H1 (cell line): ENCODE measurements at regions of chr18 and their contacts with region 1.

Region 1: GRCh38 chr18:48951448-48952286 is 902 bp upstream of the SMAD7 start:
- DNase-seq: peak in 1 of 2 experiments; percentile 76
- H3K4me3 ChIP-seq: peak overlapping the region; percentile 71 to 79 (median 72)
- H3K27ac ChIP-seq: 0 out of 2 replicates have a peak overlapping the region, but pooled peaks have one; percentile 12
- H3K4me1 ChIP-seq: peaks cover 8 to 19% (median 10%) of the 10 kb centered on the region in 4 experiments
- H3K27me3 ChIP-seq: peaks cover 0 to 46% (median 23%) of the 10 kb centered on the region in 4 experiments; a peak in 5 of 7 replicates
- CTCF ChIP-seq: peak in 1 of 3 experiments; percentile 24; a peak in 2 of 4 replicates
- EP300 ChIP-seq: no peak
- POLR2A ChIP-seq: no peak; a peak in 1 of 3 replicates
- RAD21 ChIP-seq: no peak; a peak in 1 of 4 replicates

Region 2: GRCh38 chr18:48940854-48941611 is 10.6 kb before region 1 on chr18:
- CTCF ChIA-PET with region 1: interaction called, 11 read pairs
- POLR2A ChIA-PET with region 1: interaction called, 13 read pairs
- DNase-seq: no peak
- H3K4me3 ChIP-seq: no peak overlapping the region
- H3K27ac ChIP-seq: no peak overlapping the region
- H3K4me1 ChIP-seq: peaks cover 12 to 47% (median 28%) of the 10 kb centered on the region in 4 experiments
- H3K27me3 ChIP-seq: no peaks in the 10 kb centered on the region; a peak in 2 of 7 replicates
- CTCF ChIP-seq: no peak
- EP300 ChIP-seq: no peak
- POLR2A ChIP-seq: no peak
- RAD21 ChIP-seq: no peak

Region 3: DNA sequence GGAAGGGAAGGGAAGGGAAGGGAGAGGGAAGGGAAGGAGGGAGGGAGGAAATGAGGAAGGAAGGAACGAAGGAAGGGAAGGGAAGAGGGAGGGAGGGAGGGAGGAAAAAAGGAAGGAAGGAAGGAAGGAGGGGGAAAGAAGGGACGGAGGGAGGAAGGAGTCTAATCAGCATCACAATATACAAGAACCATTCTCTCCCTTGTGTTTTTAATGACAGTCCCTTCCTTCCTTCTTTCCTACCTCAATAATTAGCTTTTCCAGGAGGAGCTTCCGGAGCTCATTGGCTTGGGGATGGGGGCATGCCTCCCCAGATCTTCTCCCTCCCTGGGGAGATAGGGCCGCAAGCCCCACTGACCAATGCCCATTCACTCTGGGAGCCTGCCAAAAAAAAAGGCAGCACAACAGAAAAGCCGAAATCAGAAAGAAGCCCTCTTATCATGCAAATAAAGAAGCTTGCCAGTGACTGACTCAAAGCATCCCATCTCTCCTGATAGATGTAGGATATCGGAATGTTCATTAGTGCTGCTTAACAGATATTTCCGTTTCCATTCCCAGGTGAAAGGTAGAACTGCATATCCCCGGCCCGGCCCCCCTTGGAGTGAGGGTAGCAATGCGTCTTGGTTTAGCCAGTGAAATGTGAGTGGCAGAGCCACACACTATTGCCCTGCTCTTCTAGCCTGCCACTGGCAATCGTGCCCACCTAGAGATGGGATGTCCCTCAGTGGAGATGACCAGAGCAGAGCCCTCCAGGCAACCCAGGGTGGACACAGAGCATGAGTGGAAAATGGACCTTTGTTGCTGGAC is 16.9 kb after region 1 on chr18:
- CTCF ChIA-PET with region 1: interaction called, 12 read pairs
- POLR2A ChIA-PET with region 1: interaction called, 17 read pairs
- DNase-seq: no peak
- H3K4me3 ChIP-seq: peak overlapping the region in 1 of 4 experiments; percentile 29; a peak in 1 of 8 replicates
- H3K27ac ChIP-seq: no peak overlapping the region
- H3K4me1 ChIP-seq: peaks cover 7 to 17% (median 13%) of the 10 kb centered on the region in 4 experiments
- H3K27me3 ChIP-seq: peaks cover 0 to 5% (median 3%) of the 10 kb centered on the region in 4 experiments; a peak in 3 of 7 replicates
- CTCF ChIP-seq: no peak; a peak in 1 of 4 replicates
- EP300 ChIP-seq: no peak
- POLR2A ChIP-seq: no peak
- RAD21 ChIP-seq: no peak

Region 4: DNA sequence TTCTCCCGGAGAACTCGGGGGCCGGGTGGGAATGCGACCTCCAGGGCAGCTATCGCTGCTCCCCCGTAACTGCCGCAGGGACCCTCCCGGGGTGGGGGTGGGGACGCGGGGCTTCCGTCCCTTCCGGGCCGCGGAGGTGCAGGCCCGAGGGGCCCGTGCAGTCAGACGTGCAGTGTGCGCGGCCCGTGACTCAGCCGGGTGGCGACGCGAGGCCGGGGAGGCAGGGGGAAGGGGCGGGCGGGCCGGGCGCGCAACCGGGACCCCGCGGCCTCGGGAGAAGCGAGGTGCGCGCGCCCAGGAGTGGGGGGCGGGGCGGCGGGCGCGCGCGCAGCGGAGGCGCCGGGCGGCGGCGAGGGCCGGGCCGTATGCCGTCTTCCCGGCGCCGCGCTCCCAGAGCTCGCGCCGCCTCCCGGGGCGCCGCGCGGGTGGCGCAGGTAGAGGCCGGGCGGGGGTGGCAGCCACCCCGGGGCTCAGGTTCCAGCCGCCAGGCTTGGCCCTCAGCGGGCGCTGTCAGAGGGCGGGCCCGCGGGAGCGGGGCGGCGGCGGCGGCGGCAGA is 24.1 kb after region 1 on chr18:
- CTCF ChIA-PET with region 1: interaction called, 8 read pairs
- POLR2A ChIA-PET with region 1: interaction called, 17 read pairs
- DNase-seq: peak in 1 of 2 experiments; percentile 74
- H3K4me3 ChIP-seq: peak overlapping the region; percentile 54 to 86 (median 58)
- H3K27ac ChIP-seq: no peak overlapping the region
- H3K4me1 ChIP-seq: peaks cover 7 to 16% (median 13%) of the 10 kb centered on the region in 4 experiments
- H3K27me3 ChIP-seq: peaks cover 0 to 27% (median 22%) of the 10 kb centered on the region in 4 experiments; a peak in 5 of 7 replicates
- CTCF ChIP-seq: no peak
- EP300 ChIP-seq: no peak
- POLR2A ChIP-seq: no peak
- RAD21 ChIP-seq: no peak

Region 5: GRCh38 chr18:48983771-48984355 is 32.2 kb after region 1 on chr18:
- CTCF ChIA-PET with region 1: no interaction called
- POLR2A ChIA-PET with region 1: interaction called, 10 read pairs
- DNase-seq: no peak
- H3K4me3 ChIP-seq: no peak overlapping the region
- H3K27ac ChIP-seq: no peak overlapping the region
- H3K4me1 ChIP-seq: peaks cover 0 to 11% (median 2%) of the 10 kb centered on the region in 4 experiments; a peak in 3 of 7 replicates
- H3K27me3 ChIP-seq: peaks cover 0 to 2% (median 0%) of the 10 kb centered on the region in 4 experiments; a peak in 2 of 7 replicates
- CTCF ChIP-seq: no peak
- EP300 ChIP-seq: no peak
- POLR2A ChIP-seq: no peak
- RAD21 ChIP-seq: no peak

Region 6: GRCh38 chr18:48989306-48990303 is 37.9 kb after region 1 on chr18:
- CTCF ChIA-PET with region 1: no interaction called
- POLR2A ChIA-PET with region 1: interaction called, 10 read pairs
- DNase-seq: no peak
- H3K4me3 ChIP-seq: no peak overlapping the region
- H3K27ac ChIP-seq: no peak overlapping the region
- H3K4me1 ChIP-seq: peaks cover 0 to 8% (median 0%) of the 10 kb centered on the region in 4 experiments; a peak in 2 of 7 replicates
- H3K27me3 ChIP-seq: no peaks in the 10 kb centered on the region; a peak in 1 of 7 replicates
- CTCF ChIP-seq: no peak
- EP300 ChIP-seq: no peak
- POLR2A ChIP-seq: no peak
- RAD21 ChIP-seq: no peak